Activated B cell treated with CpG ODN at 0.5 μM for 24 hours (primary cell): ENCODE measurements at regions of chr1 and their contacts with region 1.

Region 1: DNA sequence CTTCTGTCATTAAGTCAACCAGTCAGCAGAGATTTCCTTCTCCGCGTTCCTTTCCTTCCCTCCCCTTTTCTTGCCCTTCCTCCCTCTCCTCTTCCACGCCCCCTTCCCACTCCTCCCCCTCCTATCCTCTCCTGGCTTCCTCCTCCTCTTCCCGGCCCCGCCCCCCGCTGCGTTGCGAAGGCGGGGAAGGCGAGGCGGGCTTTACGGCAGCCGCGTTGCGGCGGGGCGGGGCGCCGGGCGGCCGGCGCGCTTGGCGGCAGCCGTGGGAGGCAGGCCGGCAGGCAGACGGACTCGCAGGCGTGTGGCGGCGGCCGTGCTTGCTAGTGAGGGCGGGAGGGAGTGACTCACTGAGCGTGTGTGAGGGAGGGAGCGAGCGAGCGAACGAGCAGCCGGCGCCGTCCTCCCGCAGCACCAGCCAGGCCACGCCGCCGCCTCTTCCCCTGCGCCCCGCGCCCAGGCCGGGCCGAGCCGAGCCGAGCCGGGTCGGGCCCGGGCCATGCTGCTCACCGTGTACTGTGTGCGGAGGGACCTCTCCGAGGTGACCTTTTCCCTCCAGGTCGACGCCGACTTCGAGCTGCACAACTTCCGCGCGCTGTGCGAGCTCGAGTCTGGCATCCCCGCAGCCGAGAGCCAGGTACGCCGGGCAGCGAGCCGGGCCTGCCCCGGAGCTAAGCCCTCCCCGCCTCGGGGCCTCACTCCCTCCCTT is at the start of gene DDI2:
- DNase-seq: peak; percentile 93
- ATAC-seq: peak; percentile 89
- H3K4me3 Mint-ChIP-seq: peak within 1 kb of the TSS; percentile 92
- H3K27ac Mint-ChIP-seq: peak within 1 kb of the TSS; percentile 96
- H3K4me1 Mint-ChIP-seq: peaks cover 47% of the 10 kb centered on the region
- H3K27me3 Mint-ChIP-seq: no peaks in the 10 kb centered on the region
- CTCF ChIP-seq: no peak
- total RNA-seq, gene DDI2: 45.8 and 59.1 TPM in 2 replicates

Region 2: DNA sequence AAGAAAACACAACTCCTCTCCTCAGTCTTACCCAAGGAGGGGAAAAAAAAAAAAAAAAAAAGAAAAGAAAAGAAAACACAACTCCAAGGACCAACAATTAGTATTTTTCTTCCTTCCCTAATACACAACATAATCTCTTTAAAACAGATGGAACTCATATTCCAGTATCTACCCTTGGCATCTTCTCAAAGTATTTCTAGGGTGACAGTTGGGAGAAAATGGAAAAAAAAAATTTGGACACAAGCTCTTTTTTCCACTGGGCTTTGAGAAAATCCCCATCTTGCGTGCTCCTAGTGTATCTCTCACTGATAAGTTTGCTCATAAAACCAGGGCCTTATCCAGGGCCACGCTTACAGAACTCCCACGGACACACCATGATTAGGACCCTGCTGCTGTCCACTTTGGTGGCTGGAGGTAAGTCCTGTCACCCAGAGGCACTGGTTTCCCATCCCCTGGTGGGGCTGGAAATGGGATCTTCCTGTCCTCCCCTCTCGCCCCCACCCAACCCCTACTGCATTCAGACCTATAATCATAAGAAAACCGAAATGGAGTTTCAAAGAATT is 141.5 kb before region 1 on chr1 and contains the start of gene CELA2B:
- CTCF ChIA-PET with region 1: no interaction called
- POLR2A ChIA-PET with region 1: no interaction called
- intact Hi-C with region 1: no loop called
- DNase-seq: no peak
- ATAC-seq: no peak
- H3K4me3 Mint-ChIP-seq: no peak within 1 kb of the TSS
- H3K27ac Mint-ChIP-seq: no peak within 1 kb of the TSS
- H3K4me1 Mint-ChIP-seq: no peaks in the 10 kb centered on the region
- H3K27me3 Mint-ChIP-seq: no peaks in the 10 kb centered on the region
- CTCF ChIP-seq: no peak
- total RNA-seq, gene CELA2B: not detected in 2 replicates

Region 3: GRCh38 chr1:15573477-15573876 is 43.9 kb before region 1 on chr1:
- CTCF ChIA-PET with region 1: no interaction called
- POLR2A ChIA-PET with region 1: interaction called, 29 read pairs
- intact Hi-C with region 1: loop called (anchors 2 kb)
- DNase-seq: no peak
- ATAC-seq: no peak
- H3K4me3 Mint-ChIP-seq: peak overlapping the region; percentile 24
- H3K27ac Mint-ChIP-seq: peak overlapping the region; percentile 86
- H3K4me1 Mint-ChIP-seq: peaks cover 43% of the 10 kb centered on the region
- H3K27me3 Mint-ChIP-seq: no peaks in the 10 kb centered on the region
- CTCF ChIP-seq: no peak

Region 4: DNA sequence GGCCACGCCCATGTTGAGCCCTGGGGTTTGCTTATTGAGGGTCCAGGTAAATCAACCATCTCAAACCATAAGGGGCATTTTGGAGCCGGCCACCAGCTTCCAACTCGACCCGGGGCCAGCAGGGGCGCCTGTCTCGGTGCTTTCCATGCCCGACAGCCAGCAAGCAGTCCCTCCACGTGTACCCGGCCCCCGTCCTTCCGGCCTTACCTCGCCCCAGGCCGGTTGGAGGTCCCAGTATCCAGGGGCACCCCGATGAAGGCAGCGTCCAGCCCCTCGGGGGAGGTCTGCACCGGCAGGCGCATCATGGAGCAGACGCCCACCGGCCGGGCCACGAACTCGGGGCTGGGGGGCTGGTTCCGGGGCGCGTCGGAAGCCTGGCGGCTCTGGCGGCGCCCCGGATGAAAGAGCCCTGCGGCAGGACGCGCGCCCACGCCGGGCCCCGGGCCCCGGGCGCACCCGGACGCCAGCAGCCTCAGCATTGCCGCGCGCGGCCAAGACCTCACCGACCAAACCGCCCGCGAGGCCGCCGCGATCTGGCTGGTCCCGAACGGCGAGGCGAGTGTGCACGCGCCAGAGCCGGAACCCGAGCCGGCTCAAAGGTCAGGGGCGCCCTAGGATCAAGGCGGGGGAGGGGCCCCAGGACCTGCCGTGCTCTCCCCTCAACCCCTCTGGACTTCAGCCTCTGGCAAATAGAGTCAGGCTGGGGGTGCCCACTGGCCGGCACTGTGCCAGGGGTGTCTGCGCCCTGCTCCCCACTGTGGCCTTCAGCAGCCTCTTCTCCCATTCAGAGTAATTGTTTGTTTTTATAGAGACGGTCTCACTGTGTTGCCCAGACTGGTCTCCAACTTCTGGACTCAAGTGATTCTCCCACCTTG is 32.6 kb before region 1 on chr1 and contains the start of gene AGMAT:
- CTCF ChIA-PET with region 1: no interaction called
- POLR2A ChIA-PET with region 1: interaction called, 16 read pairs
- intact Hi-C with region 1: loop called (anchors 1 kb)
- DNase-seq: peak; percentile 64
- ATAC-seq: peak; percentile 87
- H3K4me3 Mint-ChIP-seq: peak within 1 kb of the TSS; percentile 82
- H3K27ac Mint-ChIP-seq: peak within 1 kb of the TSS; percentile 81
- H3K4me1 Mint-ChIP-seq: peaks cover 19% of the 10 kb centered on the region
- H3K27me3 Mint-ChIP-seq: no peaks in the 10 kb centered on the region
- CTCF ChIP-seq: no peak
- total RNA-seq, gene AGMAT: 8.1 TPM in 2 replicates

Region 5: DNA sequence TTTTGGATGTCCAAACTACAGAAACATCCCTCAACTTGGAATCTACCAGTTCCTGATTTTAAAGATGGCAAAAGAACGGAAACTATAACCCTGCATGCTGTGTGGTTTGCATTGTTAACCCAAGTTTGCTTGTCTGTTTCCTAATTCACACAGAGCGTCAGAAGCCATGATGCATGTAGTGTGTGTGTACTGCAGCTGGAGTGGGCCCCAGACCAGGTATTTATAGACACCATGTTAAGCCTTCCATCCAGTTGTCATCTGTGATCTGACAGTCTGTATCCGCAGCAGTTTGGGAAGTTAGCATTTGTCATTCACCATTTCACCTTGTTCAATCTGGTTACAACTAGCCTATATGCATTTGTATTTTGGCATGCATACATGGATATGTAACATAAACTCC is 39.1 kb after region 1 on chr1:
- CTCF ChIA-PET with region 1: no interaction called
- POLR2A ChIA-PET with region 1: interaction called, 3 read pairs
- intact Hi-C with region 1: loop called (anchors 5 kb)
- DNase-seq: no peak
- ATAC-seq: no peak
- H3K4me3 Mint-ChIP-seq: no peak overlapping the region
- H3K27ac Mint-ChIP-seq: no peak overlapping the region
- H3K4me1 Mint-ChIP-seq: peaks cover 3% of the 10 kb centered on the region
- H3K27me3 Mint-ChIP-seq: no peaks in the 10 kb centered on the region
- CTCF ChIP-seq: no peak

Region 6: GRCh38 chr1:15696956-15697521 is 79.7 kb after region 1 on chr1:
- CTCF ChIA-PET with region 1: interaction called, 3 read pairs
- POLR2A ChIA-PET with region 1: interaction called, 30 read pairs
- intact Hi-C with region 1: loop called (anchors 1 kb)
- DNase-seq: peak; percentile 60
- ATAC-seq: peak; percentile 92
- H3K4me3 Mint-ChIP-seq: peak overlapping the region; percentile 81
- H3K27ac Mint-ChIP-seq: peak overlapping the region; percentile 97
- H3K4me1 Mint-ChIP-seq: peaks cover 75% of the 10 kb centered on the region
- H3K27me3 Mint-ChIP-seq: no peaks in the 10 kb centered on the region
- CTCF ChIP-seq: no peak

Region 7: GRCh38 chr1:16217061-16217785 is 599.9 kb after region 1 on chr1:
- CTCF ChIA-PET with region 1: no interaction called
- POLR2A ChIA-PET with region 1: interaction called, 3 read pairs
- intact Hi-C with region 1: loop called (anchors 5 kb)
- DNase-seq: peak; percentile 88
- ATAC-seq: peak; percentile 99
- H3K4me3 Mint-ChIP-seq: peak overlapping the region; percentile 89
- H3K27ac Mint-ChIP-seq: peak overlapping the region; percentile 41
- H3K4me1 Mint-ChIP-seq: peaks cover 20% of the 10 kb centered on the region
- H3K27me3 Mint-ChIP-seq: peaks cover 4% of the 10 kb centered on the region
- CTCF ChIP-seq: no peak